ENCODE measurements at regions of chr2 and their contacts with region 1.

Region 1: GRCh38 chr2:53422979-53423378 is 344.6 kb upstream of the CHAC2 start:
- DNase-seq: peak; percentile 30
- H3K4me3 Mint-ChIP-seq: no peak overlapping the region
- H3K27ac Mint-ChIP-seq: no peak overlapping the region
- H3K4me1 Mint-ChIP-seq: no peaks in the 10 kb centered on the region
- H3K27me3 Mint-ChIP-seq: no peaks in the 10 kb centered on the region
- CTCF ChIP-seq: no peak

Region 2: DNA sequence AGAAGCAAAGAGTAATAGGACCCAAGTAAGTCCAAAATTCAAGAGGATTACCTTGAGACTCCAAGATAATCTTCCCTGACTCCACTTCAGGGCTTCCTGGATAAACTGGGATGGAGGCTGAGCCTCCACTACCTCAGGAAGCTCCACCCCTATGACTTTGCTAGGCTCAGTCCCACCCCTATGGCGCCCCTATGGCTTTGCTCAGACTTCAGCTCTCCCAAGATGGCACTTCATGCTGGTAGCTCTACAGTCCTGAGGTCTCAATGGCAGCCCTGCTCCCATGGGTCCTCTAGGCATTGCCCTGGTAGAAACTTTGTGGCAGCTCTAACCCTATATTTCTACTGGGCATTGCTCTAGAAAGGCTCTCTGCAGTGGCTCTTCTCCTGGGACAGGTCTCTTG is 274.7 kb after region 1 on chr2:
- CTCF ChIA-PET with region 1: no interaction called
- intact Hi-C with region 1: no loop called
- DNase-seq: no peak
- H3K4me3 Mint-ChIP-seq: no peak overlapping the region
- H3K27ac Mint-ChIP-seq: no peak overlapping the region
- H3K4me1 Mint-ChIP-seq: no peaks in the 10 kb centered on the region
- H3K27me3 Mint-ChIP-seq: no peaks in the 10 kb centered on the region
- CTCF ChIP-seq: no peak

Region 3: DNA sequence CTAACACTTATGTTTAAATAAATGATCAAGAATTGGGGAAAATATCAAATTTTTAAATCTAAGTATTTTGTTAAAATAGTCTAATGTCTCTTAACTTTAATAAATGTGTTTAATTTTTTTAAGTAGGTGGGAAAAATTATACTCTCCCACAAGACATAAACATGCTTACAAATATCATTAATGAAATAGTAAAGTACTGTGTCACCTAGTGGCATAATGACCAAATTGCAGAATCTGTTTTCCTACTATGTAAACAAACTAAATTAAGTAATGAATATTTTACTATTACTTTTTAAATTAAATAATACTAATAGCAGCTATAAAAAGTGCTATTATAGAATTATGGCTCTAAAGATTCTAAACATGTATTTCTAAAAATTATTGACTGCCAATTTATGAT is 292.6 kb after region 1 on chr2:
- CTCF ChIA-PET with region 1: no interaction called
- intact Hi-C with region 1: loop called (anchors 5 kb)
- DNase-seq: no peak
- H3K4me3 Mint-ChIP-seq: no peak overlapping the region
- H3K27ac Mint-ChIP-seq: no peak overlapping the region
- H3K4me1 Mint-ChIP-seq: peaks cover 11% of the 10 kb centered on the region
- H3K27me3 Mint-ChIP-seq: no peaks in the 10 kb centered on the region
- CTCF ChIP-seq: peak; percentile 57

Region 4: DNA sequence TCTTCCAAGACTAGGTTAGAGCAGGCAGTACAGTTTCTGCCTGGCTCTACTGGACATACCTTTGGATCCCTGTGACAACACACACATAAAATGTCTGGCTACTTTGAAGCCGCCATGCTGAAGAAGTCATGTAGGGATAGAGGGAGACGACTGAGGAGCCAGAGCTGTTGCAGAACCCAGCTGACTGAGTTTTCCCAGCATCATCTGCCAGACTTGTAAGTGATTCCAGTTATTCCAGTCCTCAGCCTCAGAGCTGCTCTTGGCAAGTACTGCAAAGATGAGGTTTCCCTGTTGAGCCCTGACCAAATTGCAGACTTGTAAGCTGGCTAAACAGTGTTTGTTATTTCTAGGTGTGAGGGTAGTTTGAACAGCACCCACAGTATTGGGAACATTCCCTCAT is 864.6 kb after region 1 on chr2:
- CTCF ChIA-PET with region 1: no interaction called
- intact Hi-C with region 1: no loop called
- DNase-seq: no peak
- H3K4me3 Mint-ChIP-seq: no peak overlapping the region
- H3K27ac Mint-ChIP-seq: no peak overlapping the region
- H3K4me1 Mint-ChIP-seq: no peaks in the 10 kb centered on the region
- H3K27me3 Mint-ChIP-seq: no peaks in the 10 kb centered on the region
- CTCF ChIP-seq: no peak